Left colon (tissue), 2 donors: ENCODE measurements at regions of chr22 and their contacts with region 1.

Region 1: DNA sequence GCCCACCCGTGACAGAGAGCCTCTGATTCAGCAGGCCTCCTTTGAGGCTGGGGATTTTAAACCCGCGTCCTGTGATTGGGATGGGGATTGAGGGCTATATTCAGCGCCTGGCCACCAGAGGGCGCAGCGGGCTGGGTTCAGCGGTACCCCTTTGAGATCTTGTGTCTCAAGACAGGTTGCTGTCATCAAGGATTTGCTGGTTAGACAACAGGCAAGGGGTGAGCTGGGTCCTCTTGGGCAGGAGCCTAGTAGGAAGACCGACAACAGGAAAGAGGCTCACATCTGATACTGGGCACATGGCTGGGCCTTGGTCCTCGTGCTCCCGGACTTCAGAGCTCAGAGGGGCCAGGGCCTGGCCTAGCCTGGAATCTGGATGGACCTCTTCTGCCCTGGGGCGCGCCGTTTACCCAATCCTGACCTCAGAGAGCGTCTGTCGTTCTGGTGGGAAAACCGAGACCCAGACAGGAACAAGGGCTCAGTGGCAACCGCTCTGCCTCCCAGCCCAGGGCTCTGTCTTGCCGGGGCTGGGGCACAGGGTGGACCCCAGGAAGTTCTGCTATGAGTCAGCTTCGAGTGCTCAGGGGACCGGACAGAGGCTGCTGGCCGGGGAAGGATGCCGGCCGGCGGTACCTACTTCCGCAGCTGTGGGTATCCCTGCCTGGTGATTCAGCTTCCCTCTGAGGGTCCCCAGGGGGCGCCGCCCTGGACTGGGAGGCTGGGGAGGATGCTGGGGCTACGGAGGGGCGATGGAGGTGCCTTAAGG is 929 bp upstream of the SLC35E4 start:
- DNase-seq: peak; percentile 77 to 88
- ATAC-seq: peak; percentile 67

Region 2: DNA sequence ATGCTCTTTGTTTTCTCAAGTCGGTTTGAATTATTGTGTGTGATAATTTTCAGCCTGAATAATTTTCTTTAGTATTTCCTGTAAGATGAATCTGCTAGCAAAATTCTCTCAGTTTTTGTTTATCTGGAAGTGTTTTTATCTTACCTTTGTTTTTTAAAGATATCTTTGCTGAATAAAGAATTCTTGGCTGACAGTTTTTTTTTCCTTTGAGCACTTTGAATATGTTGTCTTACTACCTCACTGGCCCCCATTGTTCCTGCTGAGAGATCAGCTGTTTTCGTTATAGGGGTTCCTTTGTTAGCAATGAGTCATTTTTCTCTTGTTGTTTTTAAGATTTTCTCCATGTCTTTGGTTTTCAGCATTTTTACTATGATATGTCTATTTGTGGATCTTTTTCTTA is 491.4 kb before region 1 on chr22:
- intact Hi-C with region 1: no loop called
- DNase-seq: no peak
- ATAC-seq: no peak

Region 3: GRCh38 chr22:30453731-30454510 is 180.7 kb before region 1 on chr22:
- intact Hi-C with region 1: no loop called
- DNase-seq: no peak
- ATAC-seq: no peak

Region 4: GRCh38 chr22:30602049-30602448 is 32.6 kb before region 1 on chr22:
- intact Hi-C with region 1: no loop called
- DNase-seq: no peak
- ATAC-seq: peak; percentile 55

Region 5: GRCh38 chr22:30754971-30755756 is 120.5 kb after region 1 on chr22:
- intact Hi-C with region 1: loop called in 1 of 2 experiments (anchors 5 kb)
- DNase-seq: peak; percentile 50 to 65
- ATAC-seq: peak; percentile 96

Region 6: DNA sequence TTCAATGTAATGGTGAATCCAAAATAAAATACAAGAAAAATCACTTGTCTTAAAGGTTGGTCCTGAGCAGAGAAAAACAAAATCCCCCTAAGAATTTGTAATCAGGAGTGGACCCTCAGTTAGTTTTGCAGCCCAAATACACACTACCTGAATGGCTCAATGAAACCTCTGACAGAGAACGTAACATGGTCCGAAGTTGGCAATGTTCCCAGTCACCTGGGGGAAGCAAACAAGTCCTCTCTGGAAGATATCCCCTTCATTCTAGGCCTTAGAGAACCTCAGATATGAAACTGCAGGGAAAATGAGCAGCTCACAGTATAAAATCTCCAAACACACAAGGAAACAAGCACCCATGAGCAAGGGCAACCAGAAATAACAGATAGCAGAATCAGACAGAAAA is 275.7 kb after region 1 on chr22:
- intact Hi-C with region 1: loop called in 1 of 2 experiments (anchors 10 kb)
- DNase-seq: no peak
- ATAC-seq: no peak